ENCODE measurements at regions of chr1 and their contacts with region 1.

Region 1: DNA sequence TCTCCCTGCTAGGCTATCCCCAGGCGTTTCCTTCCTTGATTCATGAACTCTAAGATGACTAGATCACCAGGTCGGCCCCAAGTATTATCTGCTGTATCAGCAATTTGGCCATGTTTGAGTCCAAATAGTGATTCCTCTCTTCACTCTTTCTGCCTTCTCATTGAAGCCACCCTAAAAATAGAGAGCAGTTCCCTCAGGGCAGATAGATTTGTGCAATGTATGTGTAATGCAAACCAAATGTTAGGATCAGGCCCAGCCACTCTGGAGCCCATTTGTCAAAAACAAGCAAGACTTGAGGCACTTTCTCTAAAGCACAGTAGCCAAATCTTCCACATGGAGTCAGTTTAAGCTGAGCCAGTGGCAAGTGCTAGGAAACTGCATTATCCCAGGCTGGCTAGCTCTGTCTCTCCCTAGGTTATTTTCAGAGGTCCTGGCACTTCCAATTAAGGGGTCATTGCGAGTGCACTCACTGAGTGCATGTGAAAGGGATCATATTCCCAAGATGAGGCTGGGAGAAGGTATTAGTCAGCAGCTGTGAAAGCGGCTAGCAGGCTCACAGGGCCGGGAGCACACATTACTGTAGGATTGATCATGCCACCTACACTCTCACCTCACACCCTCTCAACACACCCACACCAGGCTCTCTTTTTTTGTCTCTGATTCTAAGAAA is 97.9 kb upstream of the RAB3GAP2 start:
- DNase-seq: peak; percentile 94
- H3K4me3 ChIP-seq: no peak overlapping the region
- H3K27ac ChIP-seq: peak overlapping the region; percentile 16
- H3K4me1 ChIP-seq: peaks cover 34% of the 10 kb centered on the region
- H3K27me3 ChIP-seq: no peaks in the 10 kb centered on the region
- CTCF ChIP-seq: no peak

Region 2: GRCh38 chr1:220294846-220295301 is 75.3 kb before region 1 on chr1:
- CTCF ChIA-PET with region 1: no interaction called
- dilution Hi-C with region 1: no loop called
- in situ Hi-C with region 1: no loop called
- intact Hi-C with region 1: loop called (anchors 5 kb)
- DNase-seq: peak; percentile 19
- H3K4me3 ChIP-seq: no peak overlapping the region
- H3K27ac ChIP-seq: no peak overlapping the region
- H3K4me1 ChIP-seq: no peaks in the 10 kb centered on the region
- H3K27me3 ChIP-seq: no peaks in the 10 kb centered on the region
- CTCF ChIP-seq: no peak

Region 3: GRCh38 chr1:220335668-220336067 is 34.5 kb before region 1 on chr1:
- CTCF ChIA-PET with region 1: no interaction called
- dilution Hi-C with region 1: no loop called
- in situ Hi-C with region 1: no loop called
- intact Hi-C with region 1: loop called (anchors 2 kb)
- DNase-seq: peak; percentile 39
- H3K4me3 ChIP-seq: no peak overlapping the region
- H3K27ac ChIP-seq: peak overlapping the region; percentile 53
- H3K4me1 ChIP-seq: peaks cover 26% of the 10 kb centered on the region
- H3K27me3 ChIP-seq: no peaks in the 10 kb centered on the region
- CTCF ChIP-seq: no peak

Region 4: DNA sequence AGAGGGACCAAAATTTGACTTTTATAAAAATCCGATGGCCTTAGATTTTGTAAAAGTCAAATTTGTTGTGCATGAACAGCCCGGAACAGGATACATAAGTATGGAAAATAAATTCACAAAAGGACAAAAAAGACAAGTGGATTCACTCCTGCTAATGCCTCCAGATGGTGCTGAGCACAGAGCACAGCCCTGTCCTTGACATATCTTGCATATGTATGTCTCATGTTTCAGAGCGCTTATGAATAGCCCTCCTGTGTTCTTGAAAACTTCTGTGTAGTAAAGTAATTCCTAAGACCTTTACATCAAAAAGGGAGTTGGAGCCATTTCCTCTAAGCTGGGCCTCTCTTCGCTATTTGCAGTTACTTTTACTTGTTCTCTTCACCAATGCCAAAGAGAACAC is 12.8 kb after region 1 on chr1:
- CTCF ChIA-PET with region 1: no interaction called
- dilution Hi-C with region 1: no loop called
- in situ Hi-C with region 1: no loop called
- intact Hi-C with region 1: loop called (anchors 1 kb)
- DNase-seq: no peak
- H3K4me3 ChIP-seq: no peak overlapping the region
- H3K27ac ChIP-seq: no peak overlapping the region
- H3K4me1 ChIP-seq: no peaks in the 10 kb centered on the region
- H3K27me3 ChIP-seq: no peaks in the 10 kb centered on the region
- CTCF ChIP-seq: no peak

Region 5: DNA sequence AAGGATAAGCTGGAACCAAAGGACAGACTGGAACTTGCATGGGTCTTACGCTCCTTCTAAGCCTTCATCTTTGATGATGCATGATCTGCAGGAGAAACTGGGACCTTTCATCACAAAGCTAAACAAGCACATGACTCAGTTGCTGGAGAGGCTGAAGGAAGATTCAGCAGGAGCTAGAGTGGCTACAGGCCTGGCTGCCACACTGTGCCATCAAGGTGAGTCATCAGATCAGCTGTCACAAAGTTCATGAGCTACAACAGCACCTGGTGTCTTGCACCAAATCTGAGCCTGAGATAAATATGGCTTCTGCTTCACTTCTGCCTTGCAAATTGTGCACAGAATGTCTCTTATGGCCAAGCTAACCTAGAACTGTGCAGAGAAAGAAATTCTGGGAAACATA is 62.3 kb after region 1 on chr1:
- CTCF ChIA-PET with region 1: no interaction called
- dilution Hi-C with region 1: no loop called
- in situ Hi-C with region 1: no loop called
- intact Hi-C with region 1: no loop called
- DNase-seq: peak; percentile 23
- H3K4me3 ChIP-seq: no peak overlapping the region
- H3K27ac ChIP-seq: no peak overlapping the region
- H3K4me1 ChIP-seq: peaks cover 5% of the 10 kb centered on the region
- H3K27me3 ChIP-seq: no peaks in the 10 kb centered on the region
- CTCF ChIP-seq: no peak

Region 6: GRCh38 chr1:220511768-220512167 is 141.6 kb after region 1 on chr1:
- CTCF ChIA-PET with region 1: no interaction called
- dilution Hi-C with region 1: no loop called
- in situ Hi-C with region 1: loop called in 1 of 2 experiments (anchors 10 kb)
- intact Hi-C with region 1: no loop called
- DNase-seq: no peak
- H3K4me3 ChIP-seq: no peak overlapping the region
- H3K27ac ChIP-seq: peak overlapping the region; percentile 9
- H3K4me1 ChIP-seq: peaks cover 46% of the 10 kb centered on the region
- H3K27me3 ChIP-seq: no peaks in the 10 kb centered on the region
- CTCF ChIP-seq: peak; percentile 38 to 40